A549 (cell line): ENCODE measurements at regions of chr17 and their contacts with region 1.

Region 1: DNA sequence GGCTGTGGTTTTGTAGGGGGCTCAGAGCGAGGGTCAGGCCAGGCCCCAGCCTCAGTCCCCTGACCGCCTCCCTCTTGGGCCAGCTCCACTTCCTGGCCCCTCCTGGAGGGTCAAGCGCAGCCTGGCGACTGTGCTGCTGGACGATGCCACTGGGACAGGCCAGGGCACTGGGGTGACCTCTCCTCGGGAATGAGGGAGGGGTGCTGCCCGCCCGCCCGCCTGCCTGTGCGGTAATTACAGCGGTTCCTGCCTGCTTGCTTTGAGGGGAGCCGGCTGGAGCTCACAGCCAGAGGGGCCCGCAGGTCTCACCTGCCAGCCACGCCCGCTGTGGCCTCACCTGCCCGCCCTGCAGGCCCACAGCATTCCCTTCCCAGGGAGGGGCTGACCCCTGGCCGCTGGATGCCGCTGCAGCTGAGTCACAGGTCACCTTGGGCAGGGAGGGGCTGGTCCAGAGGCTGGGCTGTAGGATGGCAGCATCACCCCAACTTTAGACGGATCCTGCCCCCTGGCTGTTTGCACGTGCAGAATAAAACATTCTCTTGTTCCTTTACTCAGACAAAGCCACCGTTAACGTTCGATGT is 76.7 kb upstream of the CBX4 start:
- DNase-seq: peak; percentile 77 to 82
- ATAC-seq: peak; percentile 48 to 52; a peak in 5 of 6 replicates
- H3K4me3 ChIP-seq: no peak overlapping the region
- H3K27ac ChIP-seq: peak overlapping the region; percentile 45 to 75; a peak in 5 of 6 replicates
- H3K4me1 ChIP-seq: peaks cover 35% of the 10 kb centered on the region
- CTCF ChIP-seq: peak; percentile 56
- EP300 ChIP-seq: no peak
- POLR2A ChIP-seq: no peak
- RAD21 ChIP-seq: peak; percentile 81 to 86

Region 2: DNA sequence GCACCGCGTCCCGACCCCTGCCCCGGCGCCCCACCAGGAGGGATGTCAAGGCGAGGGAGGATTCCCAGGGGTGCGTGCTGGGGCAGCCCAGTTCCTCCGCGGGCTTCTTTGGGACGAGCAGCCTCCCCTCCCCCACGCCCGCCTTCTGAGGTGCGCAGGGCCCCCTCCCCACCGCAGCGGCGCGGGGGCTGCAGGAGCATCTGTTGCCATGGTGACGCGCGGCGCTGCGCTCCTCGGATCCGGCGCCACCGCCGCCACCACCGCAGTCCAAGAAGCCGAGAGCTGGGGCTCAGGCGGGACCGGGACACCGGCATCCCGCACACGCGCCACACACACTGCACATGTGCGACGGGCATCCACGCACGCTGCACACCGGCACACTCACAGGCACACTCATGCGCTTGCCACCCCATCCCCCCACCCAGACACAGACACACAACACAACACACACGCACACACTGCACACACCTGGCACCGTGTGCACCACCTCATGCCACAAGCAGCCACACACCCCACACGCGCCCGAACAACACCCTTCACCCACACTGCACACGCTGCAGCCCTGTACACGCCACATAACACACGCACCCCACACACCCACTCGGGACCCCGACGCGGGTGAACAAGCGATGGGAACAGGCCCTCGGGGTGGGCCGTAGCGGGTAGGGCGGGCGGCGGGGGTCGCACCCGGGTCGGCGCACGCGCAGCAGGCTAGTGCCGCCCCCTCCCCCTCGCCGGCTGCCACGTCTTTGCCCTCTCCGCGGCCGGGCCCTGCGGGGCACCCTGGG is 168.2 kb before region 1 on chr17:
- CTCF ChIA-PET with region 1: interaction called, 27 read pairs
- POLR2A ChIA-PET with region 1: no interaction called
- DNase-seq: no peak
- ATAC-seq: no peak
- H3K4me3 ChIP-seq: peak overlapping the region; percentile 21; the same call in 1 of the 3 replicates
- H3K27ac ChIP-seq: peak overlapping the region; percentile 5 to 65; a peak in 3 of 6 replicates
- H3K4me1 ChIP-seq: peaks cover 34% of the 10 kb centered on the region
- CTCF ChIP-seq: no peak
- EP300 ChIP-seq: no peak
- POLR2A ChIP-seq: no peak
- RAD21 ChIP-seq: no peak

Region 3: DNA sequence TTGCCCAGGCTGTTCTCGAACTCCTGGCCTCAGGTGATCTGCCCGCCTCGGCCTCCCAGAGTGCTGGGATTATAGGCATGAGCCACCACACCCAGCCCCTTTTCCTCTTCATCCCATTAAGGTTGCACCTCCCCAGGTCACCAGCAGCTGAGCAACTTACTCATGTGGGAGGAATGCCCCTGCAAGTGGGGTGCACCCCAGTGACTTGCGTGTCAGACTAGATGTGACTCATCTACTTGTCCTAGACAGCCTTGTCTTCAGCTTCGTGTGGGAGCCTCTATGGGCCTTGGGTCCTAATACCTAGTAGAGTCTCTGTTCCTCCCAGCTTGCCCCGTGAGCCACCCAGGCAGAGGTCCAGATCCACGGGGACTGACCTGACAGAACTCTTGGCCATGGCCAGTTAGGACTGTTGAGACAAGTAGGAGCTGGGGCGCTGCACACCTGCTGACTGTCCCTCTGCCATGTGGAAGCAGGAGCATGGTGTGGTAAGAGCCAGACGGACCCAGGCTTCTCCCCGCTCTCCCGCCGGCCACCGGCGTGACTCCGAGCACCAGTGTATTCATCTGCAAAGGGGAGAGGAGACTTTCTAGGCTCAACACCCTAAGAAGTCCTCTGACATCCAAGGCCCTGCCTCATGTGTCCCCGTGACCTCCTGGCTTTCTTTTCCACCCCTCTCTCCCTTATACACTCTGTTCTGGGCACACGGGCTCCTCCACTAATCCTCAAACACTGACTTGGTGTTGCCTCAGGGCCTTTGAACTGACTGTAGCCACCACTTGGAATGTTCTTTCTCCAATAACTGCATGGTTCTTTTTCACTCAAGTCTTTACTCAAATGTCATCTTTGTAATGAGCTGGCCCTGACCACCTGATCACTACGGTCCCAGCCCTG is 65.1 kb before region 1 on chr17:
- CTCF ChIA-PET with region 1: interaction called, 27 read pairs
- POLR2A ChIA-PET with region 1: no interaction called
- DNase-seq: peak; percentile 90 to 99
- ATAC-seq: peak; percentile 78 to 87
- H3K4me3 ChIP-seq: no peak overlapping the region
- H3K27ac ChIP-seq: peak overlapping the region; percentile 71 to 83
- H3K4me1 ChIP-seq: peaks cover 36% of the 10 kb centered on the region
- CTCF ChIP-seq: no peak
- EP300 ChIP-seq: no peak; a peak in 1 of 5 replicates
- POLR2A ChIP-seq: no peak
- RAD21 ChIP-seq: peak; percentile 13 to 17; a peak in 1 of 5 replicates

Region 4: DNA sequence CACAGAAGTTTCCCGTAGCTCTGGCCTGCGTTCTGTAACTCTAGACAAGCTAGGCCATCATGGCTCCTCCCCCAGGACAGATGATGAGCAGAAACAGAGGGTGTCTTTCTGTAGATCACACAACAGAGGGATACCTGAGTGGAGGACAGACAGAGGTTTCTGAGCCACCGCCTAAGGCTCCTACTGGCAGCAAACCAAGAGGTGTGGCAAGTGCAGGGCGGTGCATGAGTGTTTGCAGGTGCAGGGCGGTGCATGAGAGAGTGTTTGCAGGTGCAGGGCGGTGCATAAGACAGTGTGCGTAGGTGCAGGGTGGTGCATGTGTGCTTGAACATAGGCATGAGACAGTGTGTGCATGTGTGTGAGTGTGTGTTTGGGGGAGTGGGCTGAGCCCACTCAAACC is 23.5 kb before region 1 on chr17:
- CTCF ChIA-PET with region 1: interaction called, 17 read pairs
- POLR2A ChIA-PET with region 1: no interaction called
- DNase-seq: no peak
- ATAC-seq: no peak; a peak in 3 of 6 replicates
- H3K4me3 ChIP-seq: no peak overlapping the region
- H3K27ac ChIP-seq: no peak overlapping the region
- H3K4me1 ChIP-seq: no peaks in the 10 kb centered on the region
- CTCF ChIP-seq: no peak
- EP300 ChIP-seq: no peak
- POLR2A ChIP-seq: no peak
- RAD21 ChIP-seq: no peak

Region 5: GRCh38 chr17:79905832-79906231 is 10.1 kb before region 1 on chr17:
- CTCF ChIA-PET with region 1: interaction called, 22 read pairs
- POLR2A ChIA-PET with region 1: no interaction called
- DNase-seq: peak; percentile 75 to 77
- ATAC-seq: peak; percentile 89 to 92
- H3K4me3 ChIP-seq: no peak overlapping the region
- H3K27ac ChIP-seq: no peak overlapping the region; a peak in 1 of 6 replicates
- H3K4me1 ChIP-seq: peaks cover 19% of the 10 kb centered on the region
- CTCF ChIP-seq: peak; percentile 35; the same call in 2 of the 3 replicates
- EP300 ChIP-seq: no peak
- POLR2A ChIP-seq: no peak
- RAD21 ChIP-seq: no peak; a peak in 1 of 5 replicates